Panc1 (cell line): ENCODE measurements at regions of chr6 and their contacts with region 1.

Region 1: DNA sequence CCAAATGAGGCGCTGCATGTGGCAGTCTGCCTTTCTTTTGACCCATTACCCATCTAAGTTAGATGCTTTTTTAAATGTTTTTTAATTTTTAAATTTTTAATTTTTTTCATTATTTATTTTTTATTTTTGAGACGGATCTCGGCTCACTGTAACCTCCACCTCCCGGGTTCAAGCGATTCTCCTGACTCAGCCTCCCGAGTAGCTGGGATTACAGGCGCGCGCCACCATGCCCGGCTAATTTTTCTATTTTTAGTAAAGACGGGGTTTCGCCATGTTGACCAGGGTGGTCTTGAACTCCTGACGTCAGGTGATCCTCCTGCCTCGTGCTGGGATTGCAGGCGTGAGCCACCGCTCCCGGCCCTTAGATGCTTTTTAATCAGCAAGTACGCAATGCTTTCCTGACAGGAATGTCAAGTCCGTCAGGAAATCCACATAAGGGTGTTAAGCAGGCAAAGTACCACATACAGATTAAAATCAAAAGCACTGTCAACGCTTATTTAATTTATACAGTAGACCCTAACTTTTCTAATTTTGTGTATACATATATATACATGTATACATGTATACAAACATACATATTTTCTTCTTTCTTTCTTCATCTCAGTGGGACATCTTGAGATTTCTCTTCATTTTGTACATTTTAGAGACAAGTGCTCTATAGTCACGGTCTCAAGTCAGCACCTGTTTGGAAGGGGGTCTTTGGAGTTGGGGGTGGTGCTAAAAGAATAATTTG is 995 bp upstream of the GSTA4 start:
- DNase-seq: peak; percentile 89
- ATAC-seq: peak; percentile 5; the same call in 1 of the 2 replicates
- H3K4me3 ChIP-seq: peak overlapping the region; percentile 45 to 59
- H3K27ac ChIP-seq: no peak overlapping the region
- H3K4me1 ChIP-seq: peaks cover 3% of the 10 kb centered on the region; the same call in 1 of the 2 replicates
- H3K27me3 ChIP-seq: no peaks in the 10 kb centered on the region
- CTCF ChIP-seq: no peak

Region 2: GRCh38 chr6:52881996-52882841 is 113.9 kb before region 1 on chr6:
- CTCF ChIA-PET with region 1: interaction called, 3 read pairs
- POLR2A ChIA-PET with region 1: no interaction called
- in situ Hi-C with region 1: no loop called
- intact Hi-C with region 1: loop called (anchors 1 kb)
- DNase-seq: peak; percentile 69
- ATAC-seq: peak; percentile 100
- H3K4me3 ChIP-seq: peak overlapping the region; percentile 66 to 70
- H3K27ac ChIP-seq: peak overlapping the region; percentile 83
- H3K4me1 ChIP-seq: no peaks in the 10 kb centered on the region
- H3K27me3 ChIP-seq: no peaks in the 10 kb centered on the region
- CTCF ChIP-seq: peak; percentile 90

Region 3: DNA sequence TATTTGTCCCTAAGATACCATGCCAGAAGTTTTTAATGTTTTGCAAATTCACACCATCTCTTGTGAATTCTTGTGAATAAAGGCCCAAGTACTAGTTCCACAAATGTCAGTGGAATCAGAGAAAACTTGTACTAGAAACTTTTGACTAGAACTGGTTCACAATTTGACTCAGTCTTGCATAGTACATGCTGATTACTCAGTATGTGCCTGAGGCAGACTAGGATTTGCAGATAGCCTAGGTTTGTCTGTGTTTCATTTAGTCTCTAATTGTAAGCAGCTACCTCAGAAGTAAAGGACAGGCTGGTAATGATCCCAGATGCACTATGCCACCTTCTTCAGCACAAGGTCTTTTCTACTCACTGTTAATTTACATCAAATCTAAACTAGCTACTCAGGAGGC is 33.2 kb after region 1 on chr6:
- CTCF ChIA-PET with region 1: no interaction called
- POLR2A ChIA-PET with region 1: no interaction called
- in situ Hi-C with region 1: no loop called
- intact Hi-C with region 1: no loop called
- DNase-seq: no peak
- ATAC-seq: no peak
- H3K4me3 ChIP-seq: no peak overlapping the region
- H3K27ac ChIP-seq: no peak overlapping the region
- H3K4me1 ChIP-seq: no peaks in the 10 kb centered on the region
- H3K27me3 ChIP-seq: no peaks in the 10 kb centered on the region
- CTCF ChIP-seq: no peak

Region 4: GRCh38 chr6:53042112-53042511 is 46.0 kb after region 1 on chr6:
- CTCF ChIA-PET with region 1: no interaction called
- POLR2A ChIA-PET with region 1: no interaction called
- in situ Hi-C with region 1: no loop called
- intact Hi-C with region 1: loop called (anchors 5 kb)
- DNase-seq: peak; percentile 68
- ATAC-seq: peak; percentile 81
- H3K4me3 ChIP-seq: no peak overlapping the region
- H3K27ac ChIP-seq: 0 out of 2 replicates have a peak overlapping the region, but pooled peaks have one; percentile 49
- H3K4me1 ChIP-seq: peaks cover 23% of the 10 kb centered on the region
- H3K27me3 ChIP-seq: no peaks in the 10 kb centered on the region
- CTCF ChIP-seq: no peak